Dendritic cell treated with granulocyte-macrophage colony-stimulating factor and Interleukin-4, amounts not matched to agents 40 ng/mL and 50 ng/mL, for 4 days (primary cell): ENCODE measurements at regions of chr14 and their contacts with region 1.

Region 1: DNA sequence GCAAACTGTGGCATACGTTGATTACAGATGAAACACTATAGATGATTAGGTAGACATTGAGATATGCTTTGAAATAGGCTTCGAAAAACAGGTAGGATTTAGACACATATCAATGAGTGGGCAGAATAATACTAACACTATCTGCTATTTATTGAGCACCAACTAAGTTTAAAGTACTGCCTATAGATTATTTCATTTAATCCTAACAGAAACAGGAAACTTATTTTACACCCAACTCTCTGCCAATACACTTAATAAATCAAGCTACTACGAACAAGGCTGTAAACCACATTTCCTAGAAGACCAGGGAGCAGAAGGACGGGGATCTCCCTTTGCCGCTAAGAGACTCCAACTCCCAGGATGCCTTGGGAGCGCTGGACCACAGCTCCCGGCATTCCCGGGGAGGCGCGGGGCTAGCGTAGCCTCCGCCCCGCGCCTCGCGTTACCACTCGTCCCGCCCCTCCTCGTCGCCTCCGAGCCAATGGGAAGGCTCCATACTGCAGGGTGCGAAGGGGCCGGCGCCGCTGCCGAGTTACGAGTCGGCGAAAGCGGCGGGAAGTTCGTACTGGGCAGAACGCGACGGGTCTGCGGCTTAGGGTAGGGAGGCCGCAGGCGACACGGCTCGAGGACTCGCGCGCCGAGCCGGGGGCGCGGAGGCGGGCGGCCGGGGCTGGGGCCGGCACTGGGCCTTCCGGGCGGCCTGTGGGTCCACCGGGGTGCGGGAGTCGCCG is at the start of gene VRK1:
- H3K4me3 Mint-ChIP-seq: peak within 1 kb of the TSS; percentile 95
- H3K27ac Mint-ChIP-seq: peak within 1 kb of the TSS; percentile 84
- H3K4me1 Mint-ChIP-seq: peaks cover 32% of the 10 kb centered on the region
- H3K27me3 Mint-ChIP-seq: peaks cover 9% of the 10 kb centered on the region

Region 2: DNA sequence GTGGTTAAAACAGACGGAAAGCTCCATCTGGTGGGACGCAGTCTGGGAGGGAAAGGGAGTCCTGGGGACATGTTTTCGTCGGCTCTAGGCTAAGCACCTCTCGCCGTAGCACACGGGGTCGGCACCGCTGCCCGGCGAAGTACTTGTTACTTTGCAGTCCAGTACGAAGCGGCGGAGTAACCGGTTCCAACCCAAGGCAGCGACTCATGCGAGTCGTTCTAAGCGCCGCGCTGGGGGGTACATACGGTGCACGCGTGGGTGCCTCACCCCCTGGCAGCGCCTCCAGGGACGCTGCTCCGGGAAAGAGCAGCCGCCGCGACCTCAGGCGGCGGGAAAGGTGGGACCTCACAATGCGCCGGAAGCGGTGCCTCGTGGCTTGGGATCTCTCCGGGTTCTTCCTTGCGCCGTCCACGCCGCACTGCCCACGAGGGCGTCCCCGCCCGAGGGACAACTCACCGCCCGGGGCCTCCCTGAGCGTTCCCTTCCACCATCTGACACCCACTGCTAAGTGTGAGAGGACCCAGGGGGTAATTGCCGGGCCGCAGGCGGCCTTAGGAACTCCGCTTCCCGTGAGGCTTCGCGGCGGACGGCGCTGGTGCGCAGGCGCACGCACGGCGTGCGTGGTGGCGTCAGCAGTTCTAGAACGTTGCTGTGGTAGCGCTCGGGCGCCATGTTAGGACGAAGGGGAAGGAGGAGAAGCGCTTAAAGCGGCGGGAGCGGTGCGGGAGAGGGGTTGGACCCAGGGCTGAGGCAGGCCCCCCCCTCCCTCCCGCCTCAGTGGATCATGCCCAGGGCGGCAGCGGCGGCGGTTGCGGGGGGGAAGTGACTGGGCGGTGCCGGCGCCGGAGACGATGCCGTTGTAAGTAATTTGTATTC is 295.0 kb before region 1 on chr14 and contains the start of gene PAPOLA:
- intact Hi-C with region 1: no loop called
- H3K4me3 Mint-ChIP-seq: peak within 1 kb of the TSS; percentile 97
- H3K27ac Mint-ChIP-seq: peak within 1 kb of the TSS; percentile 97
- H3K4me1 Mint-ChIP-seq: peaks cover 53% of the 10 kb centered on the region
- H3K27me3 Mint-ChIP-seq: no peaks in the 10 kb centered on the region

Region 3: GRCh38 chr14:96762650-96763049 is 34.4 kb before region 1 on chr14:
- intact Hi-C with region 1: loop called (anchors 5 kb)
- H3K4me3 Mint-ChIP-seq: no peak overlapping the region
- H3K27ac Mint-ChIP-seq: no peak overlapping the region
- H3K4me1 Mint-ChIP-seq: peaks cover 13% of the 10 kb centered on the region
- H3K27me3 Mint-ChIP-seq: peaks cover 31% of the 10 kb centered on the region

Region 4: GRCh38 chr14:96816281-96816680 is 19.3 kb after region 1 on chr14:
- intact Hi-C with region 1: no loop called
- H3K4me3 Mint-ChIP-seq: no peak overlapping the region
- H3K27ac Mint-ChIP-seq: no peak overlapping the region
- H3K4me1 Mint-ChIP-seq: peaks cover 11% of the 10 kb centered on the region
- H3K27me3 Mint-ChIP-seq: no peaks in the 10 kb centered on the region